K562 (cell line): ENCODE measurements at regions of chr10 and their contacts with region 1.

Region 1: GRCh38 chr10:29443745-29444523 is 155.1 kb downstream of the LYZL1 start:
- DNase-seq: peak in 2 of 4 experiments; percentile 27 to 37
- ATAC-seq: peak; percentile 83
- H3K4me3 ChIP-seq: no peak overlapping the region
- H3K27ac ChIP-seq: no peak overlapping the region
- H3K4me1 ChIP-seq: 0 out of 5 replicates have a peak, but pooled peaks cover 0 to 3% of the 10 kb centered on the region in 2 experiments
- H3K27me3 ChIP-seq: no peaks in the 10 kb centered on the region
- CTCF ChIP-seq: no peak
- EP300 ChIP-seq: no peak
- POLR2A ChIP-seq: no peak
- RAD21 ChIP-seq: no peak

Region 2: GRCh38 chr10:28975891-28976531 is 467.9 kb before region 1 on chr10:
- CTCF ChIA-PET with region 1: no interaction called
- POLR2A ChIA-PET with region 1: no interaction called
- in situ Hi-C with region 1: no loop called
- intact Hi-C with region 1: no loop called
- DNase-seq: no peak
- ATAC-seq: peak; percentile 26
- H3K4me3 ChIP-seq: no peak overlapping the region
- H3K27ac ChIP-seq: no peak overlapping the region
- H3K4me1 ChIP-seq: peaks cover 0 to 9% of the 10 kb centered on the region in 2 experiments; a peak in 2 of 5 replicates
- H3K27me3 ChIP-seq: no peaks in the 10 kb centered on the region
- CTCF ChIP-seq: no peak
- EP300 ChIP-seq: no peak
- POLR2A ChIP-seq: no peak
- RAD21 ChIP-seq: no peak

Region 3: GRCh38 chr10:29377333-29377961 is 66.5 kb before region 1 on chr10:
- CTCF ChIA-PET with region 1: interaction called, 4 read pairs
- POLR2A ChIA-PET with region 1: no interaction called
- in situ Hi-C with region 1: no loop called
- intact Hi-C with region 1: loop called (anchors 5 kb)
- DNase-seq: peak; percentile 28 to 55 (median 40)
- ATAC-seq: peak; percentile 76
- H3K4me3 ChIP-seq: no peak overlapping the region
- H3K27ac ChIP-seq: no peak overlapping the region
- H3K4me1 ChIP-seq: no peaks in the 10 kb centered on the region
- H3K27me3 ChIP-seq: peaks cover 12 to 25% of the 10 kb centered on the region in 2 experiments; a peak in 4 of 5 replicates
- CTCF ChIP-seq: peak; percentile 53 to 90 (median 61); a peak in 5 of 6 replicates
- EP300 ChIP-seq: no peak
- POLR2A ChIP-seq: no peak
- RAD21 ChIP-seq: peak; percentile 64 to 65

Region 4: DNA sequence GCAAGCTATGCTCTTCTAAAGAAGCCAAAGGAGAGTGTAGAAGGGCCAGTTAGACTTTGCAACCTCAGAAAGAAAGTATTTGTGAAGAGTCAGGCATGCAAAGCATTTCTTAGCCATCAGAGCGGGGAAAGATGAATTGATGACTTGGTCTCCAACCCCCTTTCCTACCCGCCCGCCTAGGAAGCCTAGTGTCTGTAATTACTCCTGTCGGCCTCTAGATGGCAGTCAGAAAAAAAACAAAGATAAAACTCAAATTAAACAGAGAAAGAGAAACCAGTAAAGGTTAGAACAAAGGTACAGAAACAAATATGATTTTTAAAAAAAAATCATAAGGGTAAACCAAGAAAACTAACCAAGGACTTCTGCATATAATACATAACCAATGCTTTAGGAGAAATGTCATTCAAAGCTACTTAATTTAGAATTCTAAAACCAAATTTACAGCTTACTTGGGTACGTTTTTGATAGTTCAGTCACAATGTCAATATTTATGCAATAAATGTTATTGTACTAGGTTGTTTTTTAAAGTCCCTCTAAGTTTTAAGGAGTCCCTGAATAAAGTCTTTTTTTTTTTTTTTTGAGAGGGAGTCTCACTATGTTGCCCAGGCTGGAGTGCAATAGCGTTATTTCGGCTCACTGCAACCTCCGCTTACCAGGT is 57.5 kb before region 1 on chr10:
- CTCF ChIA-PET with region 1: interaction called, 3 read pairs
- POLR2A ChIA-PET with region 1: no interaction called
- in situ Hi-C with region 1: no loop called
- intact Hi-C with region 1: loop called (anchors 2 kb)
- DNase-seq: peak; percentile 34 to 51 (median 42)
- ATAC-seq: peak; percentile 58; the same call in 2 of the 3 replicates
- H3K4me3 ChIP-seq: no peak overlapping the region
- H3K27ac ChIP-seq: no peak overlapping the region
- H3K4me1 ChIP-seq: no peaks in the 10 kb centered on the region
- H3K27me3 ChIP-seq: peaks cover 17 to 39% of the 10 kb centered on the region in 2 experiments; a peak in 3 of 5 replicates
- CTCF ChIP-seq: peak; percentile 34 to 62 (median 55); a peak in 5 of 6 replicates
- EP300 ChIP-seq: no peak
- POLR2A ChIP-seq: no peak
- RAD21 ChIP-seq: peak; percentile 32 to 40; a peak in 3 of 4 replicates

Region 5: GRCh38 chr10:29397221-29397620 is 46.7 kb before region 1 on chr10:
- CTCF ChIA-PET with region 1: no interaction called
- POLR2A ChIA-PET with region 1: no interaction called
- in situ Hi-C with region 1: no loop called
- intact Hi-C with region 1: no loop called
- DNase-seq: no peak
- ATAC-seq: no peak
- H3K4me3 ChIP-seq: no peak overlapping the region
- H3K27ac ChIP-seq: no peak overlapping the region
- H3K4me1 ChIP-seq: no peaks in the 10 kb centered on the region
- H3K27me3 ChIP-seq: peaks cover 11 to 34% of the 10 kb centered on the region in 2 experiments; a peak in 3 of 5 replicates
- CTCF ChIP-seq: no peak
- EP300 ChIP-seq: no peak
- POLR2A ChIP-seq: no peak
- RAD21 ChIP-seq: no peak

Region 6: DNA sequence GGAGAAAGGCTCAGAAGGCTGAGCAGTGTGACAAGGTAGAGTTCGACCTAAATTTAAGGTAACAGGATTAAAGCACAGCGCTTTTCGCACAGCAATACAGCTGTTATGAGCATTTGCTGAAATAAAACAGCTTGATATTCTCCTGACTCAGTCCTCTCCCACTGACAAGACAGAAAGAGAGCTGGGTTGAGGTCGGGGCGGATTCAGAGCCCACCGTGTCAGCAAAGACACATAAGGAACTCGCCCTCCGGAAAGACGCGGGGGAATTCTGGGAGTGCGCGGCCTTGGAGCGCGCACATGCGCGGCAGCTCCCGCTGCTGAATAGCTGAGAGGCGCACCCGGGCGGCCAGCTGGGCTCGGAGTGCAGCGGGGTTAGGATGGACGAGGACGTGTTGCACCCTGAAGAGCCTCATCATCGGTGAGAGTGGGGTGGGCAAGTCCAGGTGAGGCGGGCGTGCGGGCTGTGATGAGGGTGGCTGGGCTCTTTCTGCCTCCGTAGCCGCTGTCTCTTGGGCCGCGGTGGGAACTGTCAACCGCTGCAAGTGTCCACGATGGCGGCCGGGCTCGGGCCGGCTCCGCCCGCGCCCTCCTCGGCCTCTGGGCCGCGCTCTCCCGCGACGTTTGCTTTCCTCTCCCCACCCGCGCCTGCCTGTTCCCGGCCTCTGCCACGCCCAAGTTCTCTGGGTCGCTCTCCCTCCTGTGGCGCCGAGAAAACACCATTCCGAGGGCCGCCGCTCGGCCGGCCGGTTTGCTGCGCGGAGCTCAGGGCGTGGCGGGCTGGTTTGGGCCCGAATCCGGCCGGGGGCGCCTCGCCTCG is 34.5 kb before region 1 on chr10:
- CTCF ChIA-PET with region 1: no interaction called
- POLR2A ChIA-PET with region 1: no interaction called
- in situ Hi-C with region 1: no loop called
- intact Hi-C with region 1: loop called (anchors 2 kb)
- DNase-seq: peak; percentile 75 to 87 (median 79)
- ATAC-seq: peak; percentile 93
- H3K4me3 ChIP-seq: peak overlapping the region; percentile 74
- H3K27ac ChIP-seq: peak overlapping the region; percentile 78
- H3K4me1 ChIP-seq: peaks cover 15 to 18% of the 10 kb centered on the region in 2 experiments; a peak in 4 of 5 replicates
- H3K27me3 ChIP-seq: no peaks in the 10 kb centered on the region
- CTCF ChIP-seq: peak in 2 of 3 experiments; percentile 3 to 12; a peak in 1 of 6 replicates
- EP300 ChIP-seq: no peak
- POLR2A ChIP-seq: peak; percentile 86
- RAD21 ChIP-seq: no peak

Region 7: GRCh38 chr10:29496341-29497162 is 52.6 kb after region 1 on chr10:
- CTCF ChIA-PET with region 1: interaction called, 4 read pairs
- POLR2A ChIA-PET with region 1: no interaction called
- in situ Hi-C with region 1: no loop called
- intact Hi-C with region 1: loop called (anchors 2 kb)
- DNase-seq: peak; percentile 66 to 75 (median 72)
- ATAC-seq: peak; percentile 97
- H3K4me3 ChIP-seq: no peak overlapping the region
- H3K27ac ChIP-seq: no peak overlapping the region
- H3K4me1 ChIP-seq: no peaks in the 10 kb centered on the region
- H3K27me3 ChIP-seq: peaks cover 22 to 44% of the 10 kb centered on the region in 2 experiments
- CTCF ChIP-seq: peak; percentile 84 to 91 (median 87)
- EP300 ChIP-seq: no peak
- POLR2A ChIP-seq: no peak
- RAD21 ChIP-seq: peak; percentile 85 to 90

Region 8: GRCh38 chr10:29689001-29689400 is 245.1 kb after region 1 on chr10:
- CTCF ChIA-PET with region 1: no interaction called
- POLR2A ChIA-PET with region 1: no interaction called
- in situ Hi-C with region 1: no loop called
- intact Hi-C with region 1: no loop called
- DNase-seq: no peak
- ATAC-seq: no peak
- H3K4me3 ChIP-seq: no peak overlapping the region
- H3K27ac ChIP-seq: no peak overlapping the region
- H3K4me1 ChIP-seq: no peaks in the 10 kb centered on the region
- H3K27me3 ChIP-seq: peaks cover 2 to 4% of the 10 kb centered on the region in 2 experiments; a peak in 3 of 5 replicates
- CTCF ChIP-seq: no peak
- EP300 ChIP-seq: no peak
- POLR2A ChIP-seq: no peak
- RAD21 ChIP-seq: no peak